WTC11 (cell line): ENCODE measurements at regions of chr6 and their contacts with region 1.

Region 1: GRCh38 chr6:37303932-37304363 is 46.0 kb upstream of the TMEM217 start:
- DNase-seq: no peak
- ATAC-seq: peak; percentile 69
- H3K4me3 Mint-ChIP-seq: no peak overlapping the region
- H3K27ac Mint-ChIP-seq: no peak overlapping the region
- H3K4me1 Mint-ChIP-seq: no peaks in the 10 kb centered on the region
- H3K27me3 Mint-ChIP-seq: no peaks in the 10 kb centered on the region
- CTCF ChIP-seq: no peak

Region 2: DNA sequence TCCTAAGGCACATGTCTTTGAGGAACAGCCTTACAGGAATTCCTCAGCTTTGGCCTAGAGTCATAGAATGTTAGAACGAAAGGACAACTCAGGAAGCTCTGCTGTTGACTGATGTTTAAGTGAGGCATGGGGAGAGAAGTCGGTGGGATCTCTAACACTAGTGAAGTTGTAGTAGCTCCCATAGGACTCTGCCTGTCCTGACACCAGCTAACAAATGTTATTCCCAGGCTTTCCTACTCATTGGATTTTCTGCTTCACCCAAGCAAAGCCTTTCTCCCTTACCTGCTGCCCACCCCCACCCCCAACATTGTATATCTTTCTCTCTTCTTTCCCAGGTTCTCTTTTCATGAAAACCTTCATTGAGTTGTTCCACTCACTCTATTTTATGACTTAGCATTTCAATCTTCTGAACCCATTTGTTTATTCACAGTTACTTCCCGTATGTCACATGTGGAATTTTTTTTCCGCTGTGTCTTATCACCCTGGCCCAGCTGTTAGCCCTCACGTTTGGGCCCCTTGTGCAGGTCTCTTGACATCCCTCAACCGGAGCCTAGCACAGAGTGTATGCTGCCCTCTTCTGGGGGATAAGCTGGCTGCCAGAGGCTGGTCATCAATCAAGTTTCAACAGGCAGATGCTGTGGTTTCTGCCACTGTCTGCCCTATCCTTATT is 10.7 kb after region 1 on chr6:
- CTCF ChIA-PET with region 1: interaction called, 11 read pairs
- POLR2A ChIA-PET with region 1: interaction called, 3 read pairs
- DNase-seq: peak; percentile 61
- ATAC-seq: peak; percentile 97
- H3K4me3 Mint-ChIP-seq: no peak overlapping the region
- H3K27ac Mint-ChIP-seq: peak overlapping the region; percentile 10; the same call in 1 of the 2 replicates
- H3K4me1 Mint-ChIP-seq: no peaks in the 10 kb centered on the region
- H3K27me3 Mint-ChIP-seq: no peaks in the 10 kb centered on the region
- CTCF ChIP-seq: peak; percentile 47

Region 3: GRCh38 chr6:37353761-37354525 is 50.0 kb after region 1 on chr6 and contains the start of gene RNF8:
- CTCF ChIA-PET with region 1: no interaction called
- POLR2A ChIA-PET with region 1: no interaction called
- DNase-seq: peak; percentile 98
- ATAC-seq: peak; percentile 96
- H3K4me3 Mint-ChIP-seq: peak within 1 kb of the TSS; percentile 80
- H3K27ac Mint-ChIP-seq: peak within 1 kb of the TSS; percentile 78
- H3K4me1 Mint-ChIP-seq: peaks cover 34% of the 10 kb centered on the region
- H3K27me3 Mint-ChIP-seq: peaks cover 19% of the 10 kb centered on the region
- CTCF ChIP-seq: no peak
- total RNA-seq, gene RNF8: 33.1 to 35.9 TPM (median 33.3 TPM) in 3 replicates